ENCODE measurements at regions of chr6 and their contacts with region 1.

Region 1: DNA sequence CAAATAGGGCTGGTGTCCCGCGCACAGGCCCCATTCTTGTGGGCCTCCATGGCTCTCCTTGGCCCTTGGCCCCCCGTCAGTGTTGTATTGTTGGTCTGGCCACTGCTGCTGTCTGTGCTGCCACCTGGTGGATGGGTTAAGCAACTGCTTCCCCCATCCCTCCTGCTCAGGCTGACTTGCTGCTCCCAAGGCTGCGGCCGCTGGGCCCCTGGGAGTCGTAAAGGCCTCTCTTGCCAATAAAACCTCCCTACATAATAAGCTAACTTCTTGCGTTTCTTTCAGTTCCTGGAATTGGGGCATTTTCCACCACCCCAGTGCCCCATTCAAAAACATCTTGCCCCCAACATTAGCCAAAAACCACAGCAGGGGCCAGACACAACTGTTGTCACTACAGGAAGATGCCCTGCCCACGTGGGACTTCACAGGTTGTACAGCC is 27.1 kb downstream of the CD83 start:
- DNase-seq: peak; percentile 68
- H3K4me3 ChIP-seq: no peak overlapping the region
- H3K27ac ChIP-seq: no peak overlapping the region
- H3K4me1 ChIP-seq: no peaks in the 10 kb centered on the region
- H3K27me3 ChIP-seq: no peaks in the 10 kb centered on the region
- CTCF ChIP-seq: peak; percentile 85 to 94
- POLR2A ChIP-seq: no peak

Region 2: DNA sequence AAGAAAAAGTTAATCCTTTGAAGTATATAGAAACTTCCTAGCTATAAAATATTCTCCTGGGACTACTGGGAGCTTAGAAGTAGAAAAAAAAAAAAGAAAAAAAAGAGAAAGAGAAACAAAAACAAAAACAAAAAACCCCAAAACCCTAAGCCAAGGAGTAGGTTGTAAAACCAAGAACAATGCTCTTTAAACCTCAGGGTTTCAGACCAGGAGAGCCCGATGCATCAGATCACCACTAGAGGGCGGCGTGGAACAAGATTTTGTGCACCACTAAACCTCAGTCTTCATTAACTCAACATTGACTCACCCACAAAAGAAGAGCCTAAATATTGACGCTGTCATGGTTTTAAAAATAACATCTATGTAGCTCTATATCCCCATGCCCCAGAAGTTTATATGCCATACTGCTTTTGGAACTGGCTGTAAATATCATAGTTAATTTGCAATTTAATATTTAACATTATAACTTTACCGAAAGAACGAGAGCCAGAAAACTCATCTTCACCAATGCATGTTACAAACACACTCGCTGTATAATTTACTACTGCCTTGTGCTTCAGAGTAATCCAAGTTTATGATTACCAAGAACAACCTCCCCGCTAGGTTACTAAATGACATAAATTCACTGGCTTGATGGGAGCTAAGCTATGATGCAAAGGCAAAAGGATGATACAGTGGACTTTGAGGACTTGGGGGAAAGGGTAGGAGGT is 349.5 kb before region 1 on chr6:
- CTCF ChIA-PET with region 1: no interaction called
- POLR2A ChIA-PET with region 1: no interaction called
- dilution Hi-C with region 1: no loop called
- intact Hi-C with region 1: loop called (anchors 1 kb)
- DNase-seq: peak; percentile 75
- H3K4me3 ChIP-seq: no peak overlapping the region
- H3K27ac ChIP-seq: peak overlapping the region; percentile 38
- H3K4me1 ChIP-seq: peaks cover 10% of the 10 kb centered on the region
- H3K27me3 ChIP-seq: no peaks in the 10 kb centered on the region
- CTCF ChIP-seq: peak; percentile 89 to 96
- POLR2A ChIP-seq: no peak

Region 3: DNA sequence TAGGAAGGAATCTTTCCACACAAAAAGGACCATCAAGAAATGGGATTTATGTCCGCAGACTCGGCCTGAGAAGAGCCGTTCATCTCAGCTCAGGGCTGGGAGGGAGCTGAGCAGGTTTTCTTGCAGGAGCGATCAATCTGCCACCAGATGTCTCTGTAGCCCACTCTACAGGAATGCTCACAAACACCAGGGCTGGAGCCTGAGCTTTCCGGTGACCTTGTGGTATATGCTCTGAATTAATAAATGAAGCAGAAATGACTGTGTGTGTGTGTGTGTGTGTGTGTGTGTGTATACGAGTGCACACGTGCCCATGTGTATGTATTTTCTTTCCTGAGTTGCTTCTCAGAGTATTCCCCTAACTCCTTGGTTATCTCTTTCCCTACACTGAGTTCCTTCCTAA is 15.1 kb before region 1 on chr6:
- CTCF ChIA-PET with region 1: interaction called, 8 read pairs
- POLR2A ChIA-PET with region 1: no interaction called
- dilution Hi-C with region 1: no loop called
- intact Hi-C with region 1: loop called (anchors 1 kb)
- DNase-seq: peak; percentile 40
- H3K4me3 ChIP-seq: no peak overlapping the region
- H3K27ac ChIP-seq: no peak overlapping the region
- H3K4me1 ChIP-seq: no peaks in the 10 kb centered on the region
- H3K27me3 ChIP-seq: no peaks in the 10 kb centered on the region
- CTCF ChIP-seq: peak; percentile 20 to 50
- POLR2A ChIP-seq: no peak